GM10248 (cell line): ENCODE measurements at regions of chr15 and their contacts with region 1.

Region 1: DNA sequence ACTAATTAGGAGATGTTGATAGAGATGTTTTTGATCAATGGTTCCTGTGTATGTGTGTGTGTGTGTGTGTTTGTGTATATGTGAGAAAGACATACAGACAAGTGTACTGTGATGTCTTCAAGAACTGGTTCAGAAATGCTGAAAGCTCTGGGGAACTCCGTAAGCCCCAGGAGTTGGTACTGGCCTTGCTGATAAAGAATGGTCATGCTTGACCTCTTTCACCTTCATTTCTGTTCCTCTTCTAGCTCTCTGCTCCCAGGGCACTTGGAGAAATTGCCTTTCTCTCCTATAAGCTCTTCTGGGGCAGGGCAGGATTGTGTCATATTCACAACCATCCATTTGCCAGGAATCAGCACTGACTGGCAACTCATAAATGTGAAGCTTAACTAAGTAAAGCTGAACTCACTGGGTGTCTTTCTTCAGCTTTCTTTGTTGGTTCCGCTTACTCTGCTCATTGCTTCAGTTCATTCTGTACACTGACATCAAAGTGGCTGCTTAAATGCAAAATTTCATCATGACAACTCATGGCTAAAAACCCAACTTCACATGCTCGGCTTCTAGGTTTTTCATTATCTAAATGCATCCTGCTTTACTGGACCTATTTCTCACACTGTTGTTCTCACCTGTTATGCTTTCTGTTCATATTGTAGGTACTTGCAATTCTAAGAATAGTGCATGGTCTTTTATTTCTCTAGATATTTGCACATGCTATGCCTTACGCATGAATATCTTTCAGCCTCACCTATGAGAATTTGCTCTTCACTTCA is 162.1 kb upstream of the LYSMD4 start:
- DNase-seq: peak; percentile 15
- CTCF ChIP-seq: no peak

Region 2: GRCh38 chr15:99909592-99910295 is 14.4 kb after region 1 on chr15:
- CTCF ChIA-PET with region 1: interaction called, 10 read pairs
- POLR2A ChIA-PET with region 1: no interaction called
- DNase-seq: peak; percentile 50
- CTCF ChIP-seq: peak; percentile 32

Region 3: GRCh38 chr15:100308213-100308600 is 412.8 kb after region 1 on chr15:
- CTCF ChIA-PET with region 1: no interaction called
- POLR2A ChIA-PET with region 1: no interaction called
- DNase-seq: no peak
- CTCF ChIP-seq: no peak